ENCODE measurements at regions of chr10 and their contacts with region 1.

Region 1: GRCh38 chr10:106571192-106571946 is 593.1 kb downstream of the SORCS1 start:
- DNase-seq: peak; percentile 81
- H3K4me3 Mint-ChIP-seq: no peak overlapping the region
- H3K27ac Mint-ChIP-seq: peak overlapping the region; percentile 12
- H3K4me1 Mint-ChIP-seq: peaks cover 20% of the 10 kb centered on the region
- H3K27me3 Mint-ChIP-seq: no peaks in the 10 kb centered on the region
- CTCF ChIP-seq: peak; percentile 58

Region 2: GRCh38 chr10:106189292-106189691 is 382.1 kb before region 1 on chr10:
- CTCF ChIA-PET with region 1: interaction called, 10 read pairs
- POLR2A ChIA-PET with region 1: no interaction called
- intact Hi-C with region 1: loop called (anchors 1 kb)
- DNase-seq: peak; percentile 64
- H3K4me3 Mint-ChIP-seq: no peak overlapping the region
- H3K27ac Mint-ChIP-seq: no peak overlapping the region
- H3K4me1 Mint-ChIP-seq: peaks cover 13% of the 10 kb centered on the region
- H3K27me3 Mint-ChIP-seq: no peaks in the 10 kb centered on the region
- CTCF ChIP-seq: peak; percentile 33

Region 3: DNA sequence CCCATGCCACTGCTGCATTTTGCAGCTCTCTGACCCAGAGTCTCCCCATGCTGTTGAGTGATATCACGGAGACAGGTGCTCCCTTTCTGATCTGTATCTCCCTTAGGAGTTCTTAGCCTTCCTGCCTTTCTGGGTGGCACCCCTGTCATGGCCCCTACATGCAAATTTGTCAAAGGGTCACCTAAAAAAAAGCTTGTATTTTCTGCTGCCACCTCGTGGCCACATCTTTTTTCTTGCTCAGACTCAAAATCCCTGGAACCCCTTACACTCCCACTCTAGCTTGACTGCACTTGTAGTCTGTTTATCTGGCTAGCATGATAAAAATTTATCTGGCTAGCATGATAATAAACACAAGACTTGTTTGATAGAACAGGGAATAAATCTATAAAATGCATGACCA is 215.9 kb before region 1 on chr10:
- CTCF ChIA-PET with region 1: interaction called, 11 read pairs
- POLR2A ChIA-PET with region 1: no interaction called
- intact Hi-C with region 1: no loop called
- DNase-seq: peak; percentile 27
- H3K4me3 Mint-ChIP-seq: no peak overlapping the region
- H3K27ac Mint-ChIP-seq: no peak overlapping the region
- H3K4me1 Mint-ChIP-seq: peaks cover 5% of the 10 kb centered on the region
- H3K27me3 Mint-ChIP-seq: no peaks in the 10 kb centered on the region
- CTCF ChIP-seq: peak; percentile 35

Region 4: GRCh38 chr10:106370762-106371161 is 200.6 kb before region 1 on chr10:
- CTCF ChIA-PET with region 1: no interaction called
- POLR2A ChIA-PET with region 1: no interaction called
- intact Hi-C with region 1: no loop called
- DNase-seq: no peak
- H3K4me3 Mint-ChIP-seq: no peak overlapping the region
- H3K27ac Mint-ChIP-seq: no peak overlapping the region
- H3K4me1 Mint-ChIP-seq: no peaks in the 10 kb centered on the region
- H3K27me3 Mint-ChIP-seq: no peaks in the 10 kb centered on the region
- CTCF ChIP-seq: no peak

Region 5: GRCh38 chr10:106401161-106401560 is 170.2 kb before region 1 on chr10:
- CTCF ChIA-PET with region 1: interaction called, 24 read pairs
- POLR2A ChIA-PET with region 1: interaction called, 3 read pairs
- intact Hi-C with region 1: loop called (anchors 1 kb)
- DNase-seq: peak; percentile 59
- H3K4me3 Mint-ChIP-seq: no peak overlapping the region
- H3K27ac Mint-ChIP-seq: no peak overlapping the region
- H3K4me1 Mint-ChIP-seq: peaks cover 11% of the 10 kb centered on the region
- H3K27me3 Mint-ChIP-seq: no peaks in the 10 kb centered on the region
- CTCF ChIP-seq: peak; percentile 59

Region 6: DNA sequence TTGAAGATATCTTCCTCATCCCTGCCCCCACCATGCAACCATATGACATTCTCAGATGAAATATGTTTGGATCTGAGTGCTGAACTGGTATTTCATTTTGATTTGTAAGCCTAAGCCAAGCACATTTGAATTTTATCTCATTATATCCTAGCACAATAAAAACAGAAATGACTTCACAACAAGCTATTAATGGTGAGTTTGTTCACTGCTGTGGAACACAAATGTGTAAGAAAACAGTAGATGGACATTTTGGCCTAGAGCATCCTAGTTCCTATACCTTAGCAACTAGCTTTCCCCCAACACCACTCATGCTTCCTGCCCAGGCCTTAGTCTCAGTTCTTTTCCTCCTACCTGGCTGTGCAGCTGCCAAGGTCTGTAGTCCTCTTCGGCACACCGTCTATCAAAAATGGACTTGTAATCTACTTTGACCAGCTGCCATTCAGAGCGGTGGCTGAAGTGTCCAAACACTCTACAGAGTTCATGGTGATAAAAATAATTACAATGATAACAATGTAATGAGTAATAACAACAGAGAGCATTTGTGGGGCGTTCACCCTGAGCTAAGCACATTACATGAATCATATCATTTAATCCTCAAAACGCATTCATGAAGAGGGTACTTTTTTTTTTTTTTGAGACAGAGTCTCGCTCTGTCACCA is 101.3 kb after region 1 on chr10:
- CTCF ChIA-PET with region 1: no interaction called
- POLR2A ChIA-PET with region 1: no interaction called
- intact Hi-C with region 1: no loop called
- DNase-seq: no peak
- H3K4me3 Mint-ChIP-seq: no peak overlapping the region
- H3K27ac Mint-ChIP-seq: no peak overlapping the region
- H3K4me1 Mint-ChIP-seq: peaks cover 5% of the 10 kb centered on the region
- H3K27me3 Mint-ChIP-seq: no peaks in the 10 kb centered on the region
- CTCF ChIP-seq: no peak

Region 7: GRCh38 chr10:107067843-107068242 is 496.5 kb after region 1 on chr10:
- CTCF ChIA-PET with region 1: no interaction called
- POLR2A ChIA-PET with region 1: no interaction called
- intact Hi-C with region 1: no loop called
- DNase-seq: no peak
- H3K4me3 Mint-ChIP-seq: no peak overlapping the region
- H3K27ac Mint-ChIP-seq: no peak overlapping the region
- H3K4me1 Mint-ChIP-seq: no peaks in the 10 kb centered on the region
- H3K27me3 Mint-ChIP-seq: no peaks in the 10 kb centered on the region
- CTCF ChIP-seq: no peak

Measured in MCF 10A (cell line).